ENCODE measurements at regions of chr18 and their contacts with region 1.

Region 1: DNA sequence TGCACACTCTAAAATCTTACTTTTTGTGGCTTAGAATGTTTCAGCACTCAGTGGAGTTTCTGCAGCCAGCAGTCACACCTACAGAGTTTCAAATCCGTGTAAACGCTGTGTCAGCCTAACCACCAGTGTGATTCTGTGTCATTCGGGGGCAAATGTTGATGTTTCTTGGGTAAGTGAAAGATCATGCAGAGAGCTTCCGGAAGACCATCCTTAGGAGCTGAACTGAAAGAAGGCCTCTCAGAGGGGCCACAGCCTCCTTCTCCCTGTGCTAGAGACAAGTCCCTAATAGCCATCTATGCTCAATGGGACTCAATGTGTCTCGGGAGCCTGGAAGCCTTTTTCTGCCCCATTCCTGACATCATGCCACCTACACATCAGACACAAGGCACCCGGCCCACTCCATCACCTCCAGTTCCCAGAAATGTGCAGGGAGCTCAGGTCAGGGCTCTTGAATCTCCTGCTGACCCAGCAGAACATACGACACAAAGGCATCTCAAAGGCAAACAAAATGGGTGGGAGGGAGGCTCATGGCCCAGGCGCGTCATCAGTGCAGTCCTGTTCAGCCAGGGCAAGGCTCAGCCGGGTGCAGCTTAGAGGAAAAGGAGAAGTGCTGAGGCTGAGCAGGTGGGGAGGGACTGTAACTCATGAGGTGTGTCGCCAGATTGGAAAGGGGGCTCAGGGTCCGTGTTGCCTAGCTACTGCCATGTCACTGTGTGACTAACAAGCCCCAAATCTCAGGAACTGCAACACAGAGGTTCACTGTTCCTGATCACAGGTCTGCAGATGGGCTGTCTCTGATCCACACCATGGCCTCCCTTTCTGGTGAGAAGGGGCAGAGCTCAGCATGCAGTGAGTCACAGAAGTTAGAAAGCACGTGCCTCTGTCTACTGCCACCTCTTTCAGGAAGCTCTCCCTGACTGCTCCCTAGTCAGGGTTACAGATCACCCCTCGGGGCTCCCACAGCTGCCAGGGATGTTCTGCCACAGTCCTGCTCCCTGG is 82.0 kb downstream of the SMAD7 start:
- DNase-seq: peak; percentile 87
- H3K4me3 Mint-ChIP-seq: peak overlapping the region; percentile 57
- H3K27ac Mint-ChIP-seq: peak overlapping the region; percentile 99
- H3K4me1 Mint-ChIP-seq: peaks cover 38% of the 10 kb centered on the region
- H3K27me3 Mint-ChIP-seq: no peaks in the 10 kb centered on the region

Region 2: DNA sequence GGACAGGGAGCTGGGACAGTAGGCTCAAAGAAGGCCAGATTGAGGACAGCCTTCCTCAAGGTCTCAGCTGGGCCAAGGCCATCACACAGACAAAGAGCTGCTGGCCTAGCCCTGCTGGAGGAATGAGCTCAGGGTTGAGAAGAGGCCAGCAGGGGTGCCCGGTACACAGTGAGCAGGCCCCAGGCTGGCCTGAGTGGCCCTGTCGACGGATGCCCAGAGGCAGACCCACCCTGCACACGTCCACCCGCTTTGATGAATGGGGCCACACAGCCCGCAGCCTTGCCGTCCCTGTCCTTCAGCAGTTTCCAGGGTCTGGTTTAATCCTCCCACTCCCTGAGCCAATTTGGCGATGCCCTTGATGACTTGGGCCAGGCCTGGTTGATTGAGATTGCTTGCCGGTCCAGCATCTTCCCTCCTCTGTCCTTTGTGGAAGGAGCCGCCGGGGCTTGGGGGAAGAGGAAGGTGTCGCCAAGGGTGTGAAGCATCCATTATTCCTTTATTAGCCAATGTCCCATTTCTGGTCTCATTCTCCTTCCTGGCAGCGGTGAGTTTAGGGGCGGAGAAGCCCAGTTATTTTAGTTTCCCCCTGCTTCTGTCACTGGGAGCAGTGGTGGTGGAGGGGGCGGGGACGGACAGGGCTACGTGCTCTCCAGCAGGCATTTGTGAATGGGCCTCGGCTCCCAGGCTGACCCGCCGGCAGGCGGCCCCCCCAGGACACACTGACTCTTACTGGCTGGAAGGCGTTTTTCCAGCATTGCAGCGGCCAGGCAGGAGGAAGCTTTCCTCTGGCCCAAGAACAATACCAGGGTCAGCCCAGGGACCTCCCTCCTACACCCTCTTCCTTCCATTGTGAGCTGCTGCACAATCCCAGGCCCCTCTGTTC is 188.2 kb before region 1 on chr18:
- CTCF ChIA-PET with region 1: no interaction called
- POLR2A ChIA-PET with region 1: no interaction called
- intact Hi-C with region 1: no loop called
- DNase-seq: no peak
- H3K4me3 Mint-ChIP-seq: no peak overlapping the region
- H3K27ac Mint-ChIP-seq: no peak overlapping the region
- H3K4me1 Mint-ChIP-seq: no peaks in the 10 kb centered on the region
- H3K27me3 Mint-ChIP-seq: no peaks in the 10 kb centered on the region

Region 3: GRCh38 chr18:48767090-48767690 is 101.6 kb before region 1 on chr18:
- CTCF ChIA-PET with region 1: no interaction called
- POLR2A ChIA-PET with region 1: no interaction called
- intact Hi-C with region 1: no loop called
- DNase-seq: no peak
- H3K4me3 Mint-ChIP-seq: no peak overlapping the region
- H3K27ac Mint-ChIP-seq: no peak overlapping the region
- H3K4me1 Mint-ChIP-seq: no peaks in the 10 kb centered on the region
- H3K27me3 Mint-ChIP-seq: no peaks in the 10 kb centered on the region

Region 4: DNA sequence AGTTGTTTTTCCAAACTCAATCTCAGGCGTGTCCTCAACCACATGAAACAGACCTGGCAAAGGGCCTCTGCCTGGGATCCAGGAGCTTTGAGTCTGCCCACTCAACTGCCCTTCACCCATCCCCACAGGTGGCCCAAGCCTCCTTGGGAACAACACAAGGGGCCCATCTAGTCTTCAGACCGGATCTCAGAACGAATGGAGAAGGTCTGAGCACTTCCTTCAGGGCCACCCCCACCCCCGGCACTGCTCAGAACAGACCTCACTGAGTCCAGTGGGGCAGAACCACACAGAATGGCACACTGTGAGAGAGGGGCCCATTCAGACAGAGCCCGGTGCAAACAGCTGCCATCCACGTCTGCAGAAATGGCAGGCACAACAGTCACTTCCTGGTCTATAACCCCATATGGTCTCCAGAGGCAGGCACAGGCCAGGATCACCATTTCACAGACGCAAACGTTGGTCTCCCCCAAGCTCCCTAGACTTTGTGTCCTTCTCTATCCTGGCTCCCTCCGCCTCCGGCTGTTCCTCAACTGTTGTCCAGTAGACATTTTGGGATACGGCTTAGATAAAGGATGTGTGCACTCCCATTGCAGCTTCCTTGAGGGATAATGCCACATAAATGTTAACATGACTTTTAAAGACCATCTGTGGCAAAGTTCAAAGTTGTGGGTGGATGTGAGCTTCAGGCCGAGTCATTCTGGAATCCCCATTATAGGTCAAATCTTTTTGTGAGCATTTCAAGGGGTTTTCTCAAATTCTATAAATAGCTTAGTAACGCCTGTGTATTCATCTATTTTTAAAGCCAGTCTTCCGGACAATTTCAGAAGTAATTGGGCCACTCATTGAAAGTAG is 67.7 kb before region 1 on chr18:
- CTCF ChIA-PET with region 1: no interaction called
- POLR2A ChIA-PET with region 1: interaction called, 12 read pairs
- intact Hi-C with region 1: loop called (anchors 1 kb)
- DNase-seq: peak; percentile 40
- H3K4me3 Mint-ChIP-seq: no peak overlapping the region
- H3K27ac Mint-ChIP-seq: peak overlapping the region; percentile 61
- H3K4me1 Mint-ChIP-seq: peaks cover 51% of the 10 kb centered on the region
- H3K27me3 Mint-ChIP-seq: no peaks in the 10 kb centered on the region

Region 5: DNA sequence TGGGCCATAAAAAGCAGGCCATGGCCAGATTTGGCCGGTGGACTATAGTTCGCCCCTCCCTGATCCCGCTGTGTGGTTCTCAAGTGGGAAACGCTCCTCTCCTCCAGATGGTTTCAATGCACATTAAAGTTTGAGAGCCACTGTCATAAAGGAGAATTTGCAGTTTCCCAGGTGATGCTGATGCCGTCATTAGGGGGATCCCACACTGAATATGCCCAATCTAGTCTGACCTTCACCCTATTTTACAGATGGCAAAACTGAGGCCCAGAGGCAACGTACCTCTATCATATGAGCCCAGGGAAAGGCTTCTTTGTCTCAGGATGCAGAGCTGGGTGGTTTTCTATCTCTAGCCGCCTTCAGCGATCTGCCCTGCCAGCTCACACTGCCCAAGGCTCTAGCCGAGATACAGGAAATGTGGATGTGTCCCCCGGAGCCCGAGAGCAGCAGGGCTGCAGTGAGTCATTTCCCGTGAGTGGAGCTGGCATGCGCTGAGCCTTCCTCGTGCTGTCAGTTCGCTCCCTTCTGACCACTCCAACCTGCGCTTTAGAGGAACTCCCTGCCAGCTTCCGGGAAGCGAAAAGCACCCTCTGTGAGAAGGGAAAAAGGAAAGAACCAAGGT is 34.2 kb before region 1 on chr18:
- CTCF ChIA-PET with region 1: interaction called, 5 read pairs
- POLR2A ChIA-PET with region 1: interaction called, 17 read pairs
- intact Hi-C with region 1: loop called (anchors 1 kb)
- DNase-seq: peak; percentile 89
- H3K4me3 Mint-ChIP-seq: peak overlapping the region; percentile 77
- H3K27ac Mint-ChIP-seq: peak overlapping the region; percentile 92
- H3K4me1 Mint-ChIP-seq: peaks cover 83% of the 10 kb centered on the region
- H3K27me3 Mint-ChIP-seq: no peaks in the 10 kb centered on the region

Region 6: GRCh38 chr18:48934723-48935432 is 66.1 kb after region 1 on chr18:
- CTCF ChIA-PET with region 1: no interaction called
- POLR2A ChIA-PET with region 1: interaction called, 8 read pairs
- intact Hi-C with region 1: loop called (anchors 2 kb)
- DNase-seq: no peak
- H3K4me3 Mint-ChIP-seq: peak overlapping the region; percentile 40
- H3K27ac Mint-ChIP-seq: peak overlapping the region; percentile 76
- H3K4me1 Mint-ChIP-seq: peaks cover 89% of the 10 kb centered on the region
- H3K27me3 Mint-ChIP-seq: no peaks in the 10 kb centered on the region

Region 7: GRCh38 chr18:49169037-49169521 is 300.3 kb after region 1 on chr18:
- CTCF ChIA-PET with region 1: no interaction called
- POLR2A ChIA-PET with region 1: no interaction called
- intact Hi-C with region 1: loop called (anchors 1 kb)
- DNase-seq: peak; percentile 58
- H3K4me3 Mint-ChIP-seq: peak overlapping the region; percentile 36
- H3K27ac Mint-ChIP-seq: no peak overlapping the region
- H3K4me1 Mint-ChIP-seq: peaks cover 34% of the 10 kb centered on the region
- H3K27me3 Mint-ChIP-seq: no peaks in the 10 kb centered on the region